ENCODE measurements at regions of chr3 and their contacts with region 1.

Region 1: GRCh38 chr3:111895079-111895478 is 36.0 kb downstream of the PHLDB2 start:
- DNase-seq: peak; percentile 80
- ATAC-seq: peak; percentile 79
- H3K4me3 ChIP-seq: no peak overlapping the region
- H3K27ac ChIP-seq: no peak overlapping the region
- H3K4me1 ChIP-seq: peaks cover 25% of the 10 kb centered on the region
- H3K27me3 ChIP-seq: no peaks in the 10 kb centered on the region
- CTCF ChIP-seq: peak; percentile 79

Region 2: DNA sequence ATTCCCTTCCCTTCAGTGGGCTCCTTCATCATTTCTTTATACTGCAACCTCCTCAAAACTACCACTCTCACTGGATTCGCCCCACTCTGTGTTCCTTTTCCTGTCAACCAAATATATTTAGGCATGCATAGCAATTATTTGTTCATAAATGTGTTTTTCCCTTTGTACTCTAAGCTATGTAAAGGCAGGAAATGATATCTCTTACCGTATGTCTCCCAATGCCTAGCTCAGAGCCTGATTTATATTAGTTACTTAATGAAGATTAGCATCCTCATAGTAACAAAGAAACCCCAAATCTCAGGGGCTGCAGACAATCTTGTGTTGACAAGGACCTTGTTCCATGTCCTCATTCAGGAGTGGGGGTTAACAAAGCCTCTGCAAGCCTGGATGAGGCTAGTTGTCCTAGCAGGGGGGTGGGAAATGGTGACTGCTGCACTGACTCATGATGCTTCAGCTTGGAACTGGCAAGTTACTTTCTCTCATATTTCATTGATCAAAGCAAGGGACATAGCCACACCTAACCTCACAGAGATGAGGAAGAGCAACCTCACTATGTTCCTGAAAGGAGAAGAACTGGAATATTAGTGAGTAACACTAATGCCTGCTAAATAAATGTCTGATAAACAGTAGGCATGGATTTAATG is 20.8 kb before region 1 on chr3:
- CTCF ChIA-PET with region 1: no interaction called
- POLR2A ChIA-PET with region 1: no interaction called
- intact Hi-C with region 1: loop called (anchors 2 kb)
- DNase-seq: peak; percentile 93
- ATAC-seq: peak; percentile 97
- H3K4me3 ChIP-seq: peak overlapping the region; percentile 12; the same call in 1 of the 2 replicates
- H3K27ac ChIP-seq: peak overlapping the region; percentile 72
- H3K4me1 ChIP-seq: peaks cover 47% of the 10 kb centered on the region
- H3K27me3 ChIP-seq: no peaks in the 10 kb centered on the region
- CTCF ChIP-seq: no peak

Region 3: GRCh38 chr3:111936191-111936841 is 41.2 kb after region 1 on chr3:
- CTCF ChIA-PET with region 1: no interaction called
- POLR2A ChIA-PET with region 1: no interaction called
- intact Hi-C with region 1: no loop called
- DNase-seq: peak; percentile 89
- ATAC-seq: peak; percentile 94
- H3K4me3 ChIP-seq: peak overlapping the region; percentile 18; the same call in 1 of the 2 replicates
- H3K27ac ChIP-seq: peak overlapping the region; percentile 89
- H3K4me1 ChIP-seq: peaks cover 45% of the 10 kb centered on the region
- H3K27me3 ChIP-seq: no peaks in the 10 kb centered on the region
- CTCF ChIP-seq: no peak